GM10248 (cell line): ENCODE measurements at regions of chr5 and their contacts with region 1.

Region 1: GRCh38 chr5:59188419-59189225 is 605.7 kb downstream of the RAB3C start:
- DNase-seq: peak; percentile 45
- CTCF ChIP-seq: peak; percentile 58

Region 2: DNA sequence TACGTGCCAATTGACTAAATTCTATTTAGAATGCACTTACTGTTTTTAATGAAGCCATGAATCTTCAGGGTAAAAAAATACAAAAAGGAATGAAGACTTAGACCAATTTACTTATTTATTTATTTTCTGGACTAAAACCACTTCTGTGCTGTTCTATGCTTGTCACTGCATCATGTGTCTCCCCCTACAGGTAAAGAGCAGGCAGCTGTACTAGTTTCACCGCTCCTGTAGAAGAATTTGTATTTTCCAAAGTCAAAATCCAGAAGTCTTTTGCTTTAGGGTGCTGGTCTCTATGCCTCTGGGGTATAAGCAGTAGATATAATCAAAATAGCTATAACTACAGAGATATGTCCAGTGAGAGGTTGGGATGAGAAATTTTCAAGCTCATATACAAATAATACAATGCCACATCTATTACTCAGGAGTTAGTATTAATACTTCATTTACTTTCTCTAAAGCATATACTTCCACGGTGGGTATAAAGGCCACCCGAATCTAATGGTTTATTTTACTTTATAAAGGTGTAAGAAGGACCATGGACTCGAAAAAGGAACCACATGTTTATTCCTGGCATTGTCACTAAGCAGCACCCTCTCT is 14.3 kb before region 1 on chr5:
- CTCF ChIA-PET with region 1: interaction called, 18 read pairs
- POLR2A ChIA-PET with region 1: no interaction called
- DNase-seq: peak; percentile 20
- CTCF ChIP-seq: peak; percentile 83

Region 3: DNA sequence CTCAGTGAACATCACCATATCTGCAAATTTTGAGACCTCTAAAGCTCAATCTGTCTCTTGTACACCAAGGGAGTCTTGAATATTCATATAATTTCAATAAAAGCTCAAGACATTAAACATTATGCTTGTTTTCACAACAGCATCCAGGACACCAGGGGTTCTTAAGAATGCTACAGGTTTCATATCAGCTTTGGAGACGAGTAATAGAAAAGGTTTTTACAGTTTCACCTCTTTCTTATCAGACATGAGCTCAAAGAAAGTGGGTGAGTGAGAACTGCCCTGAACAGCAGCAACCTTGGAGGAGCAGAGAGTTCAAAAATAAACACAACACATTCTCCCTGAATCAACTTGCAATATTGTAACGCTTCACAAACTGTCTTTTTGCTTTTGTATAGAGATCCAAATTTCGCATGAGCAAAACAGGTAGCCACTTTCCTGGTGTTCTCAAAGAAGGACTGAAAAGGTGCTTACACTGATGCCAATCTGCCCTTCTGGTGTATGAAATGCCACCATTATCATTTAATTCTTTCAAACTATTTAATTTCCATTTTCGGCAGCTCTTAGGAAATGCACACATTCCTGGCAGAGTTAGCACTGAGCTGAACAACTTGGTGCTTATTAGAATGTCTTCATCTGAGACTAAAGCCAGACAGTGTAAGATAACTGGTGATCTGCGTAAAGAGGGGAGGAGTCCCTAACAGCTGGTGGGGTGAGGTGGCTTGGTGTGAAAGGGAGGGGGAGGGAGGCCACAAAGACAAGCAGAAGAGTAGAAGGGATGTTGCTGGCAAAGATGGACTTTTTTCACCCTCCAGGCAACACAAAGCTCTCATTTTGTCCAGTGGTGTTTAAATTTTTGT is 169.6 kb after region 1 on chr5:
- CTCF ChIA-PET with region 1: interaction called, 135 read pairs
- POLR2A ChIA-PET with region 1: no interaction called
- DNase-seq: no peak
- CTCF ChIP-seq: no peak

Region 4: DNA sequence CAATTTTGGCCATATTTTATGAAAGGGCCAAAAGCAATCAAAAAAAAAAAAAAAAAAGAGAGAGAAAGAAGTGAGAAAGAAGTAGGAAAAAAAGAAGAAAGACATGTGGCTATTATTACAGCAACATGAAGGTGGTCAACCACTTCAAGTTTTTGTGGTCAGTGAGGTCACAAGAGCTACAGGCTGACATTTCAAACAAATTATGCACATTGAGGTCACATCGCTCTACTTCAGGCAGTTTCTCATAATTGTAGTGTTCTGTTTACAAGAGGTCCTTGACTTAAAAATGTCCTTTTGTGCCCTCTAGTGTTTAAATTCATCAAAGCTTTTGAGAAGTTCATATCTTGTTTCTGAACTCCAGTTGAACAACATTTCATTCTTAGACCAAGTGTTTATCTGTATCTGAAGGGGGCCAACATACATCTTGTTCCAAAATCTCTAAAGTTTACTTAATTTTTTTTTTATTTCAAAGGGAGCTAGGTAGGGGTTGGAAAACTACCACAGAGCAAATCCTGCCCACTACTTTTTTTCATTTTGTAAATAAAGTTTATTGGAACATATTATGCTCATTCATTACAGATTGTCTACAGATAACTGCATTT is 191.8 kb after region 1 on chr5:
- CTCF ChIA-PET with region 1: interaction called, 71 read pairs
- POLR2A ChIA-PET with region 1: no interaction called
- DNase-seq: peak; percentile 45
- CTCF ChIP-seq: peak; percentile 47

Region 5: GRCh38 chr5:59799668-59800346 is 611.2 kb after region 1 on chr5:
- CTCF ChIA-PET with region 1: interaction called, 12 read pairs
- POLR2A ChIA-PET with region 1: no interaction called
- DNase-seq: peak; percentile 21
- CTCF ChIP-seq: peak; percentile 60